Activated naive CD4-positive, alpha-beta T cell treated with anti-CD3 and anti-CD28 coated beads, Interleukin-2, amount 10 ng/mL, durations not matched to agents 7 days and 5 days (primary cell): ENCODE measurements at regions of chrX and their contacts with region 1.

Region 1: DNA sequence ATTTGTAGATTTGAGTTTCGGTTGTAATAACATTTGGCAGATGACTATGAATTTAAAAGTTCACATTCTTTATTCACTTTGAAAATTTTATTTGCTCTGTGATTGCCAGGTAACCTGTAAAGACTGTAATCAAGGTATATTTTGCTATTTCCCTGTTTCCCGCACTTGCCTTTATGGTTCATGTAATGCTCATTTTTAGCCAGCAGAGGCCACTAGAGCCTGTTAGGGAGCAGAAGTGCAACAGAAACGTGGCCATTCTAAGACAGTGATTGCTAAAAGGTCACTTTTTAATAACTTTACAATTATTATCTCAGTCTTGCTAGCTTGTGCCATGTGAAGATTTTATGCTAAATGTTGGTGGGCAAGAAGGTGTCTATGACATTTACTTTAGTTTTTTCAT is 12.4 kb downstream of the YIPF6 start:
- DNase-seq: peak; percentile 36
- H3K4me3 Mint-ChIP-seq: no peak overlapping the region
- H3K27ac Mint-ChIP-seq: no peak overlapping the region
- H3K4me1 Mint-ChIP-seq: peaks cover 8% of the 10 kb centered on the region
- H3K27me3 Mint-ChIP-seq: no peaks in the 10 kb centered on the region

Region 2: GRCh38 chrX:68556029-68556428 is 44.8 kb after region 1 on chrX:
- CTCF ChIA-PET with region 1: no interaction called
- DNase-seq: no peak
- H3K4me3 Mint-ChIP-seq: no peak overlapping the region
- H3K27ac Mint-ChIP-seq: no peak overlapping the region
- H3K4me1 Mint-ChIP-seq: no peaks in the 10 kb centered on the region
- H3K27me3 Mint-ChIP-seq: no peaks in the 10 kb centered on the region

Region 3: DNA sequence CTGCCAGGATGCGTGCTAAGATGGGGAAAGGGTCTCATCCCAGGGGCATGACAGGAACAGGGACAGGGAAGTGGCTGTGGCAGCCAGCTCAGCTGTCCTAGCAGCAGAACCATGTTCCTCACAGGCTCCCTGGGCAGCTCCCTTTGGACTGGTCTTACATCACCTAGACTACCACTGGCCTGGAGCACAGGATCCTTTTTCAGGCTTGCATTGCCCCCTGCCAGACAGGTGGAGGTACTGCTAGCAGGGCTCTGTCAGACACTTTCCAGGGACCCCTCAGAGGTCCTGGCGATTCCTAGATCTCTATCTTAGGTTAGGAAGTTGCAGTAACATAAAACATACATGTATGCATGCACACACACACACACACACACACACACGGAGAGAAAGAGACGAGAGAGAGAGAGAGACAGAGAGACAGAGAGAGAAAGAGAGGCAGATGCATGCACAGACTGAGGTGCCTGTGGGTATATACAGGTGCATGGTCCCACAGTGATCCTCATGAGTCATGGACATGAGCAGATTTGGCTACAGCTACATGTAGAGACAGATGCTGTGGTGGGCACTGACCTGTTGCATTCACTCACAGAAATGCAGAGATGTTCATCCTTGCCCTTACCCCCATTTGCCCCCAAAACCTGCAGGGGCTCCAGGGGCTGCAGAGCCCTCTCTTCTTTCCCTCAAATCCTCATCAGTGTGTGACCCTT is 199.8 kb after region 1 on chrX:
- CTCF ChIA-PET with region 1: interaction called, 11 read pairs
- DNase-seq: peak; percentile 24
- H3K4me3 Mint-ChIP-seq: no peak overlapping the region
- H3K27ac Mint-ChIP-seq: no peak overlapping the region
- H3K4me1 Mint-ChIP-seq: no peaks in the 10 kb centered on the region
- H3K27me3 Mint-ChIP-seq: no peaks in the 10 kb centered on the region

Region 4: GRCh38 chrX:69374569-69374968 is 863.3 kb after region 1 on chrX:
- CTCF ChIA-PET with region 1: no interaction called
- DNase-seq: no peak
- H3K4me3 Mint-ChIP-seq: no peak overlapping the region
- H3K27ac Mint-ChIP-seq: no peak overlapping the region
- H3K4me1 Mint-ChIP-seq: no peaks in the 10 kb centered on the region
- H3K27me3 Mint-ChIP-seq: no peaks in the 10 kb centered on the region